Ascending aorta (tissue), 2 donors: ENCODE measurements at regions of chr1 and their contacts with region 1.

Region 1: DNA sequence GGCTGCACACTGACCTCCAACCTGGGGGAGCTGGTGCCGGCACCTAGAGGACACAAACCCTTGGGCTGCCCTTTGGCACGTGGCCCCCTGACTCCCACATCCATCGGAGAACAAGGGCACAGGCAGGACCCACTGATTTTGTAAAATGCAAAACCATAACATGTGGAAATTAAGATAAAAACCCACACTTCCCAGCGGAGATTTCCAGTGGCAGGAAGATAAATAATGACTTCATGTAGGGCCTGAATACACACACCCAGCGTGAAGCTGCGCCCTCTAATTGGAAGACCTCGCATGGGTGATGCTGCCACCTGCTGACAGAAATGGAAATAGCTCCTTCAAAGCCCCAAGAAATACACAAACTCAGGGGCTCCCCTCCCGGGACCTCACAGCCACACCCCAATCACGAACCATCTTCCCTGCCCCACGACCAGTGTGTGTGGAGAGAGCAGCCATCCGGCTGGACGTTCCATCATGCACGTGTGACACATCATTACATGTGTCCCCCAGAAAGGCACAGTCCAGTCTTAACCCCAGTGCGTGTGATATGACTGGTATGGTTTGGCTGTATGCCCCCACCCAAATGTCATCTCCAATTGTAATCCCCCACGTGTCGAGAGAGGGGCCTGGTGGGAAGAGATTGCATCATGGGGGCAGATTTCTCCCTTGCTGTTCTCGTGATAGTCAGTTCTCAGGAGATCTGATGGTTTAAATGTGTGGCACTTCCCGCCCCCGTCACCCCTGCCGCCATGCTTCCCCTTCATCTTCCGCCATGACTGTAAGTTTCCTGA is 5.7 kb upstream of the TPRG1L start:
- DNase-seq: peak in 1 of 2 donors; percentile 88
- H3K4me3 ChIP-seq: no peak overlapping the region
- H3K27ac ChIP-seq: no peak overlapping the region
- H3K4me1 ChIP-seq: peaks cover 4 to 14% of the 10 kb centered on the region in 2 donors
- H3K27me3 ChIP-seq: no peaks in the 10 kb centered on the region
- CTCF ChIP-seq: peak; percentile 82 to 85 (median 82)

Region 2: GRCh38 chr1:3453203-3453761 is 165.8 kb before region 1 on chr1:
- intact Hi-C with region 1: loop called (anchors 1 kb)
- DNase-seq: peak in 1 of 2 donors; percentile 82
- H3K4me3 ChIP-seq: no peak overlapping the region
- H3K27ac ChIP-seq: no peak overlapping the region
- H3K4me1 ChIP-seq: peaks cover 7 to 9% of the 10 kb centered on the region in 2 donors
- H3K27me3 ChIP-seq: no peaks in the 10 kb centered on the region
- CTCF ChIP-seq: peak; percentile 93 to 97 (median 94)

Region 3: GRCh38 chr1:3491291-3492246 is 127.5 kb before region 1 on chr1:
- intact Hi-C with region 1: loop called (anchors 1 kb)
- DNase-seq: peak in 1 of 2 donors; percentile 75
- H3K4me3 ChIP-seq: no peak overlapping the region
- H3K27ac ChIP-seq: no peak overlapping the region
- H3K4me1 ChIP-seq: no peaks in the 10 kb centered on the region
- H3K27me3 ChIP-seq: no peaks in the 10 kb centered on the region
- CTCF ChIP-seq: peak; percentile 95 to 100 (median 100)

Region 4: GRCh38 chr1:3543076-3544039 is 75.7 kb before region 1 on chr1:
- intact Hi-C with region 1: no loop called
- DNase-seq: peak; percentile 82 to 97
- H3K4me3 ChIP-seq: peak overlapping the region in 1 of 2 donors; percentile 43
- H3K27ac ChIP-seq: peak overlapping the region; percentile 97 to 98
- H3K4me1 ChIP-seq: peaks cover 52 to 74% of the 10 kb centered on the region in 2 donors
- H3K27me3 ChIP-seq: no peaks in the 10 kb centered on the region
- CTCF ChIP-seq: no peak

Region 5: GRCh38 chr1:3564921-3565827 is 53.9 kb before region 1 on chr1:
- intact Hi-C with region 1: loop called (anchors 2 kb)
- DNase-seq: no peak
- H3K4me3 ChIP-seq: no peak overlapping the region
- H3K27ac ChIP-seq: no peak overlapping the region
- H3K4me1 ChIP-seq: no peaks in the 10 kb centered on the region
- H3K27me3 ChIP-seq: no peaks in the 10 kb centered on the region
- CTCF ChIP-seq: peak; percentile 72 to 92 (median 79)